A673 (cell line): ENCODE measurements at regions of chr1 and their contacts with region 1.

Region 1: GRCh38 chr1:200620273-200621131 is at the start of gene KIF14:
- DNase-seq: peak; percentile 99
- H3K4me3 ChIP-seq: peak within 1 kb of the TSS; percentile 70
- H3K27ac ChIP-seq: peak within 1 kb of the TSS; percentile 79
- H3K4me1 ChIP-seq: peaks cover 3% of the 10 kb centered on the region
- H3K27me3 ChIP-seq: no peaks in the 10 kb centered on the region
- CTCF ChIP-seq: no peak
- total RNA-seq, gene KIF14: 37.6 and 39.7 TPM in 2 replicates

Region 2: DNA sequence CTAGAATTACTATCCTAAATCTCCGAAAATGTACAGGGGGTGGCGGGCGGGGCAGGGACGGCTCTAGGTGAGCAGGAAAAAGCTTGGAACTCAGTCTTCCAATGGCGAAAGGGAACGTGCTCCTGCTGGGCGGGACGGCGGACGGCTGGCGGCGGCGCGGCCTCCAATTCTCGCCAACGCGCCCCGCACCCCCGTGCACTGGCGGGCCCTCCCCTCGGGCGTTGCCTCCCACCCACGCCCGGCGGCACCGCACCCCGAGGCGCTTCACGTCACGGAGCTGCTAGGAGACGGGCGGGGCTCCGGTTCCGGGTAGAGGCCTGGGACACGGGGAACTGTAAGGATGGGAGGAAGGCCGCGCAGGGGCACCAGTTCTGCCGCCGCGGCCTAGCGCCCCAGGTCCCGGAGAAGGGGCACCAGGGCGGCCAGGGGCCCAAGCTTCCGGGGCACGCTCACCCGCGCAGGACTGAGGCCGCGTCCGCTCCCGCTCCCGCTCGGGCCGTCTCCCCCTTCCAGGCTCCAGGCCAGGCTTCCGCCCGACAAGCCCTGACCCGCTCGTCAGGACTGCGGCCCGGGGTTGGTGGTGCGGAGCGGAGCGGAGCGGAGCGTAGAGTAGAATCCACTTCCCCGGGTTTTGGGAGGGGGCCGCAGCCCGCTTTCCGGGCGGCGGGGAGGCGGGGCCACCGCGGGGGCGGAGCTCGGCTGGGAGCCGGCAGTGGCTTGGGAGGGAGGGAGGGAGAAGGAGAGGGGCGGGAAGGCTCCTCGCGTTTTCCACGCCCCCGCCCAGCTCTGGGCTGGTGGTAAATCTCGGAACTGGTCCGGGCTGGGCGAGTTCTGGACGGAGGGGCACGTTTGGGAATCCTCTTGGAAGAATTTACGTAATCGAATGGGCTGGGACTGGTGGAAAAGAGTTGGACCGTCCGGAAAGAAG is 49.1 kb after region 1 on chr1 and contains the start of gene DDX59:
- CTCF ChIA-PET with region 1: interaction called, 6 read pairs
- POLR2A ChIA-PET with region 1: no interaction called
- intact Hi-C with region 1: loop called (anchors 2 kb)
- DNase-seq: peak; percentile 98
- H3K4me3 ChIP-seq: peak within 1 kb of the TSS; percentile 69
- H3K27ac ChIP-seq: peak within 1 kb of the TSS; percentile 99
- H3K4me1 ChIP-seq: peaks cover 30% of the 10 kb centered on the region
- H3K27me3 ChIP-seq: no peaks in the 10 kb centered on the region
- CTCF ChIP-seq: no peak
- total RNA-seq, gene DDX59: 16.0 and 17.4 TPM in 2 replicates

Region 3: DNA sequence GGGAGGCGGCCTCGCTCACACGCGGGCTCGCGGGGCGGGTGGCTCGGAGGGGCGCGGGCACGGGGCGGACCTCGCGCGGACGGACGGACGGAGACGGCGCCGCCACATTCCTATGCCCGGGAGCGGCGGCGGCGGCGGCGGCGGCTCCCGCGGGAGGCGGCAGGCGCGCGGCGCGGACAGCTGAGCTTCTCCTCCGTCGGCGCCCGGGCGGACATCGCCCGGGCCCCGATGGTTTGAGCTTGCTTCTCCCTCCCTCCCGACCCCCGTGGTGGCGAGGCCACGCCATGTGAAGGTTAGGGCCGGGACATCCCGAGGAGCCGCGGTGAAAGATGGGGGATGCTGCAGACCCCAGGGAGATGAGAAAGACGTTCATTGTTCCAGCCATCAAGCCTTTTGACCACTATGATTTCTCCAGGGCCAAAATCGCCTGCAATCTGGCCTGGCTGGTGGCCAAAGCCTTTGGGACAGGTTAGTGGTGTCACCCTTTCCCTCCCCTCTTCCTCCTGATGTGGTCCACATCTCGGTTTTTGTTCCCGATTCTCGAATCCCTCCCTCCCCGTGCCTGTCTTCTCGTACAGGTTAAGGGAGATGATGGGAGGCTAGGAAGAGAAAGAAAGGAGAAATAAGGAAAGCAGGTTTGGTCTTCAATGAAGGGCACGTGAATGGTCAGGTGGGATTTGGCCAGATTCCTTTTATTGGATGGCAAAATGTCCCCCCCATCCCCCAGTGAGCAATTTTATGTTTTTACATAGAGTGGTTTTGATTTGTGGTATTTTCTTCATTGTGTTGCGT is 119.2 kb after region 1 on chr1:
- CTCF ChIA-PET with region 1: interaction called, 3 read pairs
- POLR2A ChIA-PET with region 1: no interaction called
- intact Hi-C with region 1: loop called (anchors 2 kb)
- DNase-seq: no peak
- H3K4me3 ChIP-seq: peak overlapping the region; percentile 89
- H3K27ac ChIP-seq: peak overlapping the region; percentile 92
- H3K4me1 ChIP-seq: peaks cover 20% of the 10 kb centered on the region
- H3K27me3 ChIP-seq: no peaks in the 10 kb centered on the region
- CTCF ChIP-seq: no peak

Region 4: DNA sequence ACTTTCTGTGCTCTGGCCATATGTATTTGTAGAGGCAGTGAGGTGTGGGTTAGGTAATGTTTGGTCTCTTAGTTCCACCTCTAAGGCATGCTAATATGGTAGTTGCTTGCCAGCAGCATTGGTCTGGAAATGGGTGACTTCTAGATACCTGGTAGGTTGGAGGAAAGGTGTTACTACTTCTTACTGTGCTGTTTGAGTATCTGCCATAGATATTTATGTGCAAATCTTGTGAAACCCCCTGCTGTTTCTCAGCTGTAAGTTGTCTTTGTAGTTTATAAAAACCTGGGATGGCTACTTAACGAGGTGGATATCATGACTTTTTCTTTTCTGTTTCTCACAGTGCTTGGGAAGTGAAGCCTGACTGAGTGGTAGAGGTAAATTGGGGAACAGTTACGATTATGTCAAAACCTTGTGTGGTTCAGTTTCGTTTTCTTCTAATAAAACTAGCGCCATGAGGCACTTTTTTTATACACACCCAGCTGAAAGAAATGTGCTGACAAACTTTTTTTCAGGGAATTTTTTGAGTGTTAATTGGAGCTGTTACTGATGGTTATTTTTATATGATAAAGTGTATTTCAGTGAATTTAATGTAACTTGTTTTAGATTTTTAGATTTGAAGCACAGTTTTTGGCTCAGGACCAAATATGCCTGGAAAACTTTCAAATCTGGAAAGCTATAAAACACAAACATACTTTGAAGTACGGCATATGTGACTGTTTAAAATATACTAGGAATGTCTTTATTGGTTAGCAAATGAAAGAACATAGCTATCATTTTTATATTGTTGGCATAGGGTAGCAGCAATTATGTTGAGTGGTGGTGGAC is 160.3 kb after region 1 on chr1:
- CTCF ChIA-PET with region 1: interaction called, 4 read pairs
- POLR2A ChIA-PET with region 1: interaction called, 13 read pairs
- intact Hi-C with region 1: no loop called
- DNase-seq: no peak
- H3K4me3 ChIP-seq: no peak overlapping the region
- H3K27ac ChIP-seq: no peak overlapping the region
- H3K4me1 ChIP-seq: peaks cover 11% of the 10 kb centered on the region
- H3K27me3 ChIP-seq: no peaks in the 10 kb centered on the region
- CTCF ChIP-seq: no peak

Region 5: GRCh38 chr1:200802865-200803512 is 182.5 kb after region 1 on chr1:
- CTCF ChIA-PET with region 1: interaction called, 11 read pairs
- POLR2A ChIA-PET with region 1: no interaction called
- intact Hi-C with region 1: loop called (anchors 1 kb)
- DNase-seq: peak; percentile 84
- H3K4me3 ChIP-seq: no peak overlapping the region
- H3K27ac ChIP-seq: no peak overlapping the region
- H3K4me1 ChIP-seq: no peaks in the 10 kb centered on the region
- H3K27me3 ChIP-seq: no peaks in the 10 kb centered on the region
- CTCF ChIP-seq: peak; percentile 98

Region 6: DNA sequence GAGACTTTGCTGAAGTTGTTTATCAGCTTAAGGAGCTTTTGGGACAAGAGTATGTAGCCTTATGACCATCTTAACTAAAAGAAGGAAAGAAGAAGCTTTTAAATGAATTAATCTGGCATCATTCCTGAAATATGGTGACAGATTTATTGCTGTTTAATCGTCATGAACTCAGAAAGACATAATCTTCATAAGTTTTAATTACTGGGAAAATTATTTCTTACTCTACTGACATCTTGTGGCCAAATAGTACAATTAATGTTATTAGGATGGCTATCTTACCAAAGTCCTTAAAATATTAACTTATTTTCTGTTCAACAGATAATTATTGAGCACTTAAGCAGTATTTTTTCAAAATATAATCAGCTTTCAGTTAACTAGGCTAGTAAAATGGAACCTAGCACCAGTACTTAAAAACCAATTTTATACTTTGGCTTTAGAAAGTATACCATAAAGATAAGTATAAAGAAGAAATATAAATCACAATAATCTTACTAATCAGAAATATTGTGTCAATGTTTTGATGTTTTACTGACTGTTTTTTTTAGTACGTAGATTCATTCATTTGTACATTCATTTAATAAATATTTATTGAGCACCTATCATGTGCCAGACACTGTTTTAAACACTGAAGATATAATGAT is 217.5 kb after region 1 on chr1:
- CTCF ChIA-PET with region 1: interaction called, 3 read pairs
- POLR2A ChIA-PET with region 1: no interaction called
- intact Hi-C with region 1: loop called (anchors 10 kb)
- DNase-seq: peak; percentile 53
- H3K4me3 ChIP-seq: no peak overlapping the region
- H3K27ac ChIP-seq: no peak overlapping the region
- H3K4me1 ChIP-seq: no peaks in the 10 kb centered on the region
- H3K27me3 ChIP-seq: no peaks in the 10 kb centered on the region
- CTCF ChIP-seq: peak; percentile 62